Tibial artery (tissue), 4 donors: ENCODE measurements at regions of chr6 and their contacts with region 1.

Region 1: GRCh38 chr6:111614833-111615582 is 9.3 kb upstream of the TRAF3IP2 start:
- DNase-seq: no peak
- H3K4me3 ChIP-seq: no peak overlapping the region
- H3K27ac ChIP-seq: no peak overlapping the region
- H3K4me1 ChIP-seq: no peaks in the 10 kb centered on the region
- H3K27me3 ChIP-seq: no peaks in the 10 kb centered on the region
- CTCF ChIP-seq: no peak

Region 2: DNA sequence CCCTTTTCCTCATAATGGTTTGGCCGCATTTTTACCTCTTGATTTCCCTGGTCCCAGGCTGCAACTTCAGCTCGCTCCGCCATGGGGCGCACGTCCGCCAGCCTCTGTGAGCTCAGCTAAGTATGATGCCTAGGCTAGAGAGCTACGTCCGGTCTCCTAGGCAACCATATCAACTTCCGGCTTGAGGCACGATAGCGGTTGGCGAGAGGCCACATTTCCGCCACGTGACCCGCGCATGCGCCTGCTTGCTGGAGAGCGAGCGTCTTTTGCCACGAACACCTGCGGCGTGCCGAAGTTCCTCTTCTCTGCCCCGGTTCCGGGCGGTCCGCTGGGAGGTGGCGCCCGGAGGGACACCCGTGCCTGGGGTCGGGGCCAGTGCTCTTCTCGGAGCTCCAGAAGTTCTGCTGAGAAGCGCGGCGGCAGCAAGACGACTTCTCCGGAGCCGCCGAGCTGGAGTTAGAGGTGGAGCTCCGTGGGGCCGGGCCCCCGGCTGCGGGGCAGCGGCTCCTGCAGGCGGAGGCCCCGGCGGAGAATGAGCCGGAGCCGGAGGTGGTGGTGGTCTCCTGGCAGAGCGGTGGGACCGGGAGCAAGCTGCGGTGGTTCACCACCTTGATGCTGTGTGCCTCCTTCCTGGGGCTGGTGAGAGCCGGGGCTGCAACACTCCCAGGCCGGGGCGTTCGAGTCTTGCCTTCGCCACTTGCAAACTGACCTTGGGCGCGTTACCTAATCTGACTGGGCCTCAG is 355.7 kb before region 1 on chr6:
- intact Hi-C with region 1: loop called (anchors 10 kb)
- DNase-seq: peak; percentile 99
- H3K4me3 ChIP-seq: peak overlapping the region; percentile 62 to 87
- H3K27ac ChIP-seq: peak overlapping the region; percentile 79 to 85
- H3K4me1 ChIP-seq: peaks cover 0 to 23% (median 14%) of the 10 kb centered on the region in 4 donors
- H3K27me3 ChIP-seq: no peaks in the 10 kb centered on the region
- CTCF ChIP-seq: peak; percentile 95 to 97

Region 3: DNA sequence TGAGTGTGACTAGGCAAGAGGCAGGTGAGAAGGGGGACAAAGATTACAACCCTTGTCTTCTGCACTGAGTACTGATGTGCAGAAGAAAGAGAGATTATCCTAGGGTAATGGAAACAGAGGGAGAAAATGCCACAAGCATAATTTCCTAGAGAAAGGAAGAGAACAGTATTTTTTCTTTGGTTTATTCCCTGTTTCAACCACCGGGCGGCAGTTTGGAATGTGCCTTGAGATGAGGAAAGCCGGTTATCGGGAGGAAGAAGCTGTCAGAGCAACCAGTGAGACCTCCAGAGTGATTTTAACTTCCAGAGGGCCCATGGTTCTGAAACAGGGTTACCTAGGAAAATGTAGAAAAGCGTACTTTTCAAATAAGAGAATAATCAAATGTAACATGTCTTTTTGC is 253.4 kb before region 1 on chr6:
- intact Hi-C with region 1: loop called (anchors 10 kb)
- DNase-seq: peak in 1 of 2 donors; percentile 35
- H3K4me3 ChIP-seq: no peak overlapping the region
- H3K27ac ChIP-seq: no peak overlapping the region
- H3K4me1 ChIP-seq: no peaks in the 10 kb centered on the region
- H3K27me3 ChIP-seq: no peaks in the 10 kb centered on the region
- CTCF ChIP-seq: peak; percentile 38 to 51

Region 4: GRCh38 chr6:112018619-112019416 is 403.8 kb after region 1 on chr6:
- intact Hi-C with region 1: no loop called
- DNase-seq: peak; percentile 76 to 83
- H3K4me3 ChIP-seq: no peak overlapping the region
- H3K27ac ChIP-seq: peak overlapping the region; percentile 55 to 58
- H3K4me1 ChIP-seq: peaks cover 0 to 66% (median 33%) of the 10 kb centered on the region in 4 donors
- H3K27me3 ChIP-seq: no peaks in the 10 kb centered on the region
- CTCF ChIP-seq: no peak